ENCODE measurements at regions of chr1 and their contacts with region 1.

Region 1: DNA sequence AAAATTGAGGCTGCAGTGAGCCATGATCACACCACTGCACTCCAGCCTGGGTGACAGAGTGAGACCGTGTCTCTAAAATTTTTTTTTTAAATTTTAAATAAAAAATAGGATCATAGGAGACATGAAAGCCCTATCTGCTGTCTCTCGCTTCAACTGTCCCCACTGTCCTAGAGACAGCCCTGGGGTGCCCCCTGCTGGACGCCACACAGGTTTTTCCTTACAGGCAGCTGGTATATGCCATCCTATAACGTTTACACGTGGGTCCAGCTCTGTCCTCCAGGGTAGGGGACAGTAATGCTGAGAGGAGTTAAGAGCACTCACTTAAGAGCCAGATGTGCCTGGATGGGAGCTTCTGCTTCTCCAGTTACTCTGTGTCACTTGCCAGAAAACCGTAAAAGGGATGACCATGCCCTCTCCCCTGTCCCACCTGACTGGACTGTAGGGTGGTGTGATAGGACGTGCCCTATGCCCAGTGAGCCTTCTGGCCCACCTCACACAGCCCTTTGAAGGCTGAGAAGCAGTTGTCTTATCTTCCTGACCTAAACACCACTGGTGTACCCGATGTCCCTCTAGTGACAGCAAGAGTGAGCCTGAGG is 8.5 kb downstream of the FBXO2 start:
- DNase-seq: peak; percentile 83
- H3K4me3 ChIP-seq: no peak overlapping the region
- H3K27ac ChIP-seq: no peak overlapping the region
- H3K4me1 ChIP-seq: peaks cover 0 to 9% of the 10 kb centered on the region in 2 experiments; a peak in 1 of 4 replicates
- H3K27me3 ChIP-seq: no peaks in the 10 kb centered on the region
- CTCF ChIP-seq: peak; percentile 83
- EP300 ChIP-seq: no peak
- RAD21 ChIP-seq: peak; percentile 88

Region 2: GRCh38 chr1:11256299-11256698 is 389.5 kb before region 1 on chr1:
- CTCF ChIA-PET with region 1: interaction called, 14 read pairs
- POLR2A ChIA-PET with region 1: no interaction called
- DNase-seq: no peak
- H3K4me3 ChIP-seq: no peak overlapping the region
- H3K27ac ChIP-seq: no peak overlapping the region
- H3K4me1 ChIP-seq: peaks cover 0 to 2% of the 10 kb centered on the region in 2 experiments; a peak in 2 of 4 replicates
- H3K27me3 ChIP-seq: no peaks in the 10 kb centered on the region
- CTCF ChIP-seq: no peak
- EP300 ChIP-seq: no peak
- RAD21 ChIP-seq: no peak

Region 3: DNA sequence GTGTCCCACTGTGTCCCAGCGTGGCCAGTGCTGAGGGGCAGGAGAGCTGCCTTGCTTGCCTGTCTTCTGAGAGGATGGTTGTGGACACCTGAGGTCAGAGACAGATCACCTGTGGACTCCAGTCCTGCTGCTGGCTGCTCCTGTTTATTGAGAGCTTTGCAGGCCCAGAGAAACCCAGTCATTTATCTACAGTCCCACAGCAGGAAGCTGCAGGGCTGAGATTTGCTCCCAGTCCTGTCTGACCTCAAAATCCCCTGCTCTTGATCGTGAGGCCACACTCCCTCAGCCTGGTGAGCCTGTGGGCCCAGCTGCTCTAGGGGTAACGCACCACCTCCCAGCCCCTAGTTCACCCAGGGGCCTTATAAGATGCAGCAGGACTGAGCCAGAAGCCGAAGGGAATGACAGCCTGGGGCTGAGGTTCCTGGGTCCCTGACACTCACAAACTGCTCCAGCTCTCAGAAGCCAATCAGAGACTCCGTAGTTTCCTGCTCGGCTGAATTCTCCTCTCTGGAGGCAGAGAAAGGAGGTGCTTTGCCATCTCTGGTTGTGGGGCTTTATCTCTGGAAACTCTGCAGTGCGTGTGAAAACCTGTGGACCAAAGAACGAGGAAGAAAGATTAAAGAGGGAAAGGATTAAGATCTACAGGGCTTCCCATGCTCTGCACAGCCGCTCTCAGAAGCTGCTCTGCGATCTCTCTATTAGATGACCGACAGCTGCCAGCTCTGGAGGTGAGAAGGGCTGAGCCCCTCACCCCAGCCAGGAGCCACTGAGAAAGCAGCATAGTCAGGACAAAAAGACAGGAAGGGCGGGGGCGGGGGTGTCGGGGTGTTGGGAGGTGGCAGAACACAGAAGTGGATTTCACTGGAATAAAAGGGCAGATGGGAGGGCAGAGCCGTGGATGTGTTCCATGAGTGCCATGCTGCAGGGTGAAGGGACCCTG is 333.7 kb before region 1 on chr1:
- CTCF ChIA-PET with region 1: interaction called, 13 read pairs
- POLR2A ChIA-PET with region 1: no interaction called
- DNase-seq: no peak
- H3K4me3 ChIP-seq: no peak overlapping the region
- H3K27ac ChIP-seq: peak overlapping the region in 1 of 2 experiments; percentile 28; a peak in 1 of 4 replicates
- H3K4me1 ChIP-seq: peaks cover 0 to 29% of the 10 kb centered on the region in 2 experiments; a peak in 1 of 4 replicates
- H3K27me3 ChIP-seq: no peaks in the 10 kb centered on the region
- CTCF ChIP-seq: no peak
- EP300 ChIP-seq: no peak
- RAD21 ChIP-seq: no peak

Region 4: GRCh38 chr1:11458811-11459275 is 186.9 kb before region 1 on chr1:
- CTCF ChIA-PET with region 1: interaction called, 20 read pairs
- POLR2A ChIA-PET with region 1: no interaction called
- DNase-seq: peak; percentile 90
- H3K4me3 ChIP-seq: no peak overlapping the region
- H3K27ac ChIP-seq: peak overlapping the region in 1 of 2 experiments; percentile 90; a peak in 2 of 4 replicates
- H3K4me1 ChIP-seq: peaks cover 0 to 61% of the 10 kb centered on the region in 2 experiments; a peak in 2 of 4 replicates
- H3K27me3 ChIP-seq: peaks cover 7% of the 10 kb centered on the region; the same call in 1 of the 2 replicates
- CTCF ChIP-seq: no peak
- EP300 ChIP-seq: peak in 1 of 2 experiments; percentile 89; a peak in 2 of 4 replicates
- RAD21 ChIP-seq: peak; percentile 64

Region 5: DNA sequence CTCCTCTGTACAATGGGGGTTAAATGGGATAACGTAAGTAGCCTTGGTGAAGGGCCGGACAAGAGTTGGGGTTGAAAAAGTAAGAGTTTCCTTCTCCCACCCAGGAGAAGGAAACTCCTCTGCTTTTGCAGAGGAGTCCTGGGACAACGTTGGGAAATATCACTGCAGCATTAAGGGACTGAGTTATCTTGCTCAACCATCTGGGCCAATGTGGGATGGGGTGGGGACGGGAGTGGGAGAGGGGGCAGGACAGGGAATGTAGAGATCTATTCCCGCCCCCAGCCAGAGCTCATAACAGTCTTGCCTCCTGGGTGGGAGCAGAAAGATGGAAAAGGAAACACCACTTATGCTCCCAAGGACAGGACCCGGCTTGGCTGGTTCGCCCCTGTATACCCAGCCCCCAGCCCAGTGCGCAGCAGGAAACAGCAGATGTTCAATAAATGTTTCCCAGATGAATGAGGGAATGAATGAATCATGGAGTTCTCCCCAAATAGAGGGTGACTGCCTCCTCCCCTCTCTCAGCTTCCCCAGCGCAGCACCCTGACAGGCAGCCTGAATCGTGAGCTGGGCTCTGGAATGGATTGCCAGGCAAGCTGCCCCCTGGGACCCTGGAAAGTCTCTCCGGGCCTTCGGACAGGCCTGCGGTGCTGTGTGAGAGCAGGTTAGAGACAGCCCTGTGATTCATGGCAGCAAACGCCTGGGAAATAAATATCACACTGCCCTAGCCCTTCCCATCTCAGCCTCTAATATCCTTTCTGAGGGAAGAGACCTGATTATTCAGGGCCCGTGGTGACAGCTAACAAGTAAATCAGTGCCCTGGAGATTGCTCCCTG is 16.4 kb before region 1 on chr1:
- CTCF ChIA-PET with region 1: interaction called, 34 read pairs
- POLR2A ChIA-PET with region 1: no interaction called
- DNase-seq: no peak
- H3K4me3 ChIP-seq: no peak overlapping the region
- H3K27ac ChIP-seq: no peak overlapping the region
- H3K4me1 ChIP-seq: peaks cover 0 to 5% of the 10 kb centered on the region in 2 experiments; a peak in 1 of 4 replicates
- H3K27me3 ChIP-seq: no peaks in the 10 kb centered on the region; the same call in 1 of the 2 replicates
- CTCF ChIP-seq: no peak
- EP300 ChIP-seq: no peak
- RAD21 ChIP-seq: no peak

Region 6: GRCh38 chr1:11693024-11693590 is 47.3 kb after region 1 on chr1:
- CTCF ChIA-PET with region 1: interaction called, 10 read pairs
- POLR2A ChIA-PET with region 1: no interaction called
- DNase-seq: no peak
- H3K4me3 ChIP-seq: no peak overlapping the region
- H3K27ac ChIP-seq: peak overlapping the region in 1 of 2 experiments; percentile 13; a peak in 1 of 4 replicates
- H3K4me1 ChIP-seq: peaks cover 6 to 15% of the 10 kb centered on the region in 2 experiments; a peak in 3 of 4 replicates
- H3K27me3 ChIP-seq: peaks cover 14% of the 10 kb centered on the region
- CTCF ChIP-seq: no peak
- EP300 ChIP-seq: no peak
- RAD21 ChIP-seq: no peak

Region 7: GRCh38 chr1:11719313-11720032 is 73.7 kb after region 1 on chr1:
- CTCF ChIA-PET with region 1: interaction called, 205 read pairs
- POLR2A ChIA-PET with region 1: interaction called, 5 read pairs
- DNase-seq: peak; percentile 82
- H3K4me3 ChIP-seq: peak overlapping the region; percentile 21 to 36; a peak in 2 of 4 replicates
- H3K27ac ChIP-seq: no peak overlapping the region
- H3K4me1 ChIP-seq: peaks cover 0 to 4% of the 10 kb centered on the region in 2 experiments; a peak in 1 of 4 replicates
- H3K27me3 ChIP-seq: no peaks in the 10 kb centered on the region; the same call in 1 of the 2 replicates
- CTCF ChIP-seq: peak; percentile 98
- EP300 ChIP-seq: no peak
- RAD21 ChIP-seq: peak; percentile 93

Region 8: GRCh38 chr1:12001249-12001917 is 355.6 kb after region 1 on chr1:
- CTCF ChIA-PET with region 1: no interaction called
- POLR2A ChIA-PET with region 1: no interaction called
- DNase-seq: peak; percentile 51
- H3K4me3 ChIP-seq: no peak overlapping the region
- H3K27ac ChIP-seq: peak overlapping the region in 1 of 2 experiments; percentile 28; a peak in 2 of 4 replicates
- H3K4me1 ChIP-seq: no peaks in the 10 kb centered on the region
- H3K27me3 ChIP-seq: no peaks in the 10 kb centered on the region
- CTCF ChIP-seq: peak; percentile 63
- EP300 ChIP-seq: no peak
- RAD21 ChIP-seq: peak; percentile 38; the same call in 1 of the 2 replicates

Measured in SK-N-SH (cell line).